ENCODE measurements at regions of chr6 and their contacts with region 1.

Region 1: DNA sequence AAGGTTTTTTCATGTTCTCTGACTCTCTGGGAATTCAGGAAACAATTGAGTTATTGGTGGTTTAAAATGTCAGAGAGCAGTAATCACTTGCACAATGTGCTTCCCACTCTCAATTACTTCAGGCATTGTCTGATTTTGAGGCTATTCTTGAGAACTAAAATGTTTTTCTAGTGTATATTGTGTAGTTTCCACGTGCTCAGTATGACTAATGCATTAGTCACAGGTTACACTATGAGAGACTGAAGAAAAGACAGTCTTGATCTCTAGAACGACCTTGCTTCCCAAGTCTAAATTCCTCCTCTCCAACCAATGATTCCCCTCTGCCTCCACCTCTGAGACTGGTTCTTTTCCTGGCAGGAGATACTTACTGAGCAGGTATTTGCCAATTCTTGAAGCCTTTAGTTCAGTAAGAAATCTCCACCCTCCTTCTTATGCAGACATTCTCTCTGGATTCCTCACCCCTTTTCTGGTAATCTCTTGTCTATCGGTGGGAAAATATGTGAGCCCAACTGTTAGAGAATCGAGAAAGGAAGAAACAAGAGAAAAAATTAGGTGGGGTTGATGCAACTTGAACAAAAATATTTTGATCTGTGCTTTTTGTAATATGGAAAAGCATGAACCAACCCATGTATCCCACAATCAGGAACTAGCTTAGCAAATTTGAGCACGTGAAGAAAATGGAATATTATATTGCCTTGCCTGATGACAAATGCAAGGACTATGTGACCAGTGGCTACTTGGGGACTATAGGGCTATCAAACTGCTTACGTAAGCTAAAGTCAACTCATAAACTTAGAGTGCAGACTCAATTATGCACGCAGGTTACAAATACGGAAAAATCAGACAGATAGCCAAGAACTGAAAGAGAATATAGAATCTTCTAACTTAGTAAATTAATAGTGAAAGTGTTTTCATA is 61.1 kb upstream of the SLC22A16 start:
- DNase-seq: no peak
- H3K4me3 Mint-ChIP-seq: no peak overlapping the region
- H3K27ac Mint-ChIP-seq: peak overlapping the region; percentile 80
- H3K4me1 Mint-ChIP-seq: peaks cover 64% of the 10 kb centered on the region
- H3K27me3 Mint-ChIP-seq: no peaks in the 10 kb centered on the region

Region 2: GRCh38 chr6:110468731-110469130 is 68.7 kb before region 1 on chr6:
- intact Hi-C with region 1: no loop called
- DNase-seq: no peak
- H3K4me3 Mint-ChIP-seq: no peak overlapping the region
- H3K27ac Mint-ChIP-seq: no peak overlapping the region
- H3K4me1 Mint-ChIP-seq: no peaks in the 10 kb centered on the region
- H3K27me3 Mint-ChIP-seq: peaks cover 27% of the 10 kb centered on the region

Region 3: GRCh38 chr6:110589865-110590513 is 52.5 kb after region 1 on chr6:
- intact Hi-C with region 1: loop called (anchors 1 kb)
- DNase-seq: no peak
- H3K4me3 Mint-ChIP-seq: no peak overlapping the region
- H3K27ac Mint-ChIP-seq: peak overlapping the region; percentile 78
- H3K4me1 Mint-ChIP-seq: peaks cover 32% of the 10 kb centered on the region
- H3K27me3 Mint-ChIP-seq: peaks cover 4% of the 10 kb centered on the region

Region 4: GRCh38 chr6:110653381-110653780 is 115.9 kb after region 1 on chr6:
- intact Hi-C with region 1: loop called (anchors 2 kb)
- DNase-seq: no peak
- H3K4me3 Mint-ChIP-seq: no peak overlapping the region
- H3K27ac Mint-ChIP-seq: no peak overlapping the region
- H3K4me1 Mint-ChIP-seq: peaks cover 33% of the 10 kb centered on the region
- H3K27me3 Mint-ChIP-seq: no peaks in the 10 kb centered on the region

Region 5: DNA sequence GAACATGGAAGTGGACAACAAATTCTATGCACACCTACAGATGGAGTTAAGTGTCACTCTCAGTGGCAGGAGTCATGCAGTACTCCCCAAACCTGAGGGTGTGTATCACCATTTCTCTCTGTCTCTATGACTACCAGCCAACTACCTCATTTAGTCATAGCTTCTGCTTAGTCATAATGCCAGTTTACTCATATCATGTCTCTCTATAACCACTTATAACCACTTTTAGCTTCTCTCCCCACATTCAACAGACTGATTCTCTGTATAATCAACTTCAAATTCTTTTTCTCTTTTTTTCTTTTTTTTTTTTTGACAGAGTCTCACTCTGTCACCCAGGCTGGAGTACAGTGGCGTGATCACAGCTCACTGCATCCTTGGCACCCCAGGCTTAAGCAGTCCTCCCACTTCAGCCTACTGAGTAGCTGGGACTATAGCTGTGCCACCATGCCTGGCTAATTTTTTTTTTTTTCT is 407.2 kb after region 1 on chr6:
- intact Hi-C with region 1: loop called (anchors 2 kb)
- DNase-seq: peak; percentile 44
- H3K4me3 Mint-ChIP-seq: peak overlapping the region; percentile 10
- H3K27ac Mint-ChIP-seq: peak overlapping the region; percentile 83
- H3K4me1 Mint-ChIP-seq: peaks cover 11% of the 10 kb centered on the region
- H3K27me3 Mint-ChIP-seq: no peaks in the 10 kb centered on the region

Measured in activated T-helper 2 cell treated with anti-CD3 and anti-CD28 coated beads, Interferon-gamma antibody, Interleukin-2, Interleukin-4, amounts not matched to agents 10 μg/mL and 5 μg/mL and 100 μg/mL, durations not matched to agents 14 hours and 24 hours and 36 hours (primary cell).